B cell (primary cell): ENCODE measurements at regions of chr5 and their contacts with region 1.

Region 1: DNA sequence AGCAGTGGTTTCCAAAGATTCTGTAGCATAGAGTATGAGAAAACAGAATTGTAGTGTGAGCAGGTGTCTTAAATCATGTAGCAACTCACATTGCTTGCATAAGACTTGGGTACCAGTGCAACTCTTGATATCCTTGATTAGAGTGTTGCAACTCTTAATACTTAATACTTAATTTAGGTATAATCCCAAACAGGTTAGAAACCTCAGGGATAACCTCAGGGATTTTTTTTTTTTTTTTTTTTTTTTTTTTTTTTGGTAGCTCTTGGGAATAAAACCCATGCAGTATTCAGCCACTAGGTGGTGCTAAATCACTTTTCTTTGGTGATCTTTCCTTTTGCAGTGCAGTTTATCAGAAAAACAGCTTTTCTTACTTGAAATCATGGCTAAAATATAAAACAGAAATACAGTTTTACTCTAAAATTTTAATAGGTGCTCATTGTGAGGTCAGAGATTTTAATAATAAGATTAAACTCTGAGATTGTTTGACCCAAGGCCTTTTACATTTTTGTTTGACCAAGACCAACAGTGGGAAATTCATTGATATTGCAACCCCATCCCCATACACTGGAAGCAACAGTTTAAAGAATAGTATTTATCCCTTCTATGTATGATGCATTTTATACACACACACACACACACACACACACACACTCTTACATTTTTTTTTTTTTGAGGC is 55.3 kb downstream of the ERAP1 start:
- DNase-seq: peak; percentile 72
- ATAC-seq: no peak
- H3K4me3 ChIP-seq: no peak overlapping the region
- H3K4me3 Mint-ChIP-seq: no peak overlapping the region
- H3K27ac ChIP-seq: no peak overlapping the region
- H3K27ac Mint-ChIP-seq: no peak overlapping the region
- H3K4me1 ChIP-seq: no peaks in the 10 kb centered on the region
- H3K4me1 Mint-ChIP-seq: no peaks in the 10 kb centered on the region
- H3K27me3 ChIP-seq: no peaks in the 10 kb centered on the region
- H3K27me3 Mint-ChIP-seq: no peaks in the 10 kb centered on the region
- CTCF ChIP-seq: peak; percentile 85

Region 2: GRCh38 chr5:96614110-96614691 is 138.3 kb before region 1 on chr5:
- CTCF ChIA-PET with region 1: interaction called, 36 read pairs
- POLR2A ChIA-PET with region 1: no interaction called
- intact Hi-C with region 1: loop called (anchors 1 kb)
- DNase-seq: peak; percentile 56
- ATAC-seq: no peak
- H3K4me3 ChIP-seq: no peak overlapping the region
- H3K4me3 Mint-ChIP-seq: no peak overlapping the region
- H3K27ac ChIP-seq: no peak overlapping the region
- H3K27ac Mint-ChIP-seq: no peak overlapping the region
- H3K4me1 ChIP-seq: peaks cover 0 to 3% of the 10 kb centered on the region in 2 donors
- H3K4me1 Mint-ChIP-seq: no peaks in the 10 kb centered on the region
- H3K27me3 ChIP-seq: peaks cover 0 to 6% (median 0%) of the 10 kb centered on the region in 4 experiments
- H3K27me3 Mint-ChIP-seq: peaks cover 18% of the 10 kb centered on the region
- CTCF ChIP-seq: peak; percentile 75

Region 3: GRCh38 chr5:96807075-96807654 is 54.7 kb after region 1 on chr5:
- CTCF ChIA-PET with region 1: interaction called, 12 read pairs
- POLR2A ChIA-PET with region 1: no interaction called
- intact Hi-C with region 1: no loop called
- DNase-seq: no peak
- ATAC-seq: peak; percentile 19
- H3K4me3 ChIP-seq: peak overlapping the region; percentile 47 to 86 (median 73)
- H3K4me3 Mint-ChIP-seq: peak overlapping the region; percentile 90
- H3K27ac ChIP-seq: peak overlapping the region; percentile 86 to 90
- H3K27ac Mint-ChIP-seq: peak overlapping the region; percentile 99
- H3K4me1 ChIP-seq: peaks cover 25 to 32% of the 10 kb centered on the region in 2 donors
- H3K4me1 Mint-ChIP-seq: peaks cover 49% of the 10 kb centered on the region
- H3K27me3 ChIP-seq: no peaks in the 10 kb centered on the region
- H3K27me3 Mint-ChIP-seq: no peaks in the 10 kb centered on the region
- CTCF ChIP-seq: no peak

Region 4: GRCh38 chr5:97009212-97009898 is 256.9 kb after region 1 on chr5:
- CTCF ChIA-PET with region 1: interaction called, 3 read pairs
- POLR2A ChIA-PET with region 1: no interaction called
- intact Hi-C with region 1: loop called (anchors 5 kb)
- DNase-seq: peak; percentile 81
- ATAC-seq: peak; percentile 68
- H3K4me3 ChIP-seq: peak overlapping the region in 2 of 5 experiments; percentile 11 to 44
- H3K4me3 Mint-ChIP-seq: peak overlapping the region; percentile 69
- H3K27ac ChIP-seq: peak overlapping the region; percentile 65 to 88
- H3K27ac Mint-ChIP-seq: peak overlapping the region; percentile 81
- H3K4me1 ChIP-seq: peaks cover 16 to 23% of the 10 kb centered on the region in 2 donors
- H3K4me1 Mint-ChIP-seq: peaks cover 26% of the 10 kb centered on the region
- H3K27me3 ChIP-seq: no peaks in the 10 kb centered on the region
- H3K27me3 Mint-ChIP-seq: no peaks in the 10 kb centered on the region
- CTCF ChIP-seq: no peak

Region 5: GRCh38 chr5:97534166-97534565 is 781.7 kb after region 1 on chr5:
- CTCF ChIA-PET with region 1: interaction called, 3 read pairs
- POLR2A ChIA-PET with region 1: no interaction called
- intact Hi-C with region 1: loop called (anchors 10 kb)
- DNase-seq: peak; percentile 18
- ATAC-seq: no peak
- H3K4me3 ChIP-seq: no peak overlapping the region
- H3K4me3 Mint-ChIP-seq: no peak overlapping the region
- H3K27ac ChIP-seq: no peak overlapping the region
- H3K27ac Mint-ChIP-seq: no peak overlapping the region
- H3K4me1 ChIP-seq: no peaks in the 10 kb centered on the region
- H3K4me1 Mint-ChIP-seq: no peaks in the 10 kb centered on the region
- H3K27me3 ChIP-seq: no peaks in the 10 kb centered on the region
- H3K27me3 Mint-ChIP-seq: no peaks in the 10 kb centered on the region
- CTCF ChIP-seq: peak; percentile 35